Caco-2 (cell line): ENCODE measurements at regions of chr7 and their contacts with region 1.

Region 1: GRCh38 chr7:86939197-86939814 is 120.1 kb downstream of the ELAPOR2 start:
- DNase-seq: peak; percentile 41 to 74
- H3K4me3 ChIP-seq: no peak overlapping the region
- H3K4me3 Mint-ChIP-seq: no peak overlapping the region
- H3K27ac Mint-ChIP-seq: no peak overlapping the region
- H3K4me1 ChIP-seq: no peaks in the 10 kb centered on the region
- H3K4me1 Mint-ChIP-seq: no peaks in the 10 kb centered on the region
- H3K27me3 ChIP-seq: no peaks in the 10 kb centered on the region
- H3K27me3 Mint-ChIP-seq: peaks cover 8% of the 10 kb centered on the region
- CTCF ChIP-seq: peak; percentile 60 to 68

Region 2: GRCh38 chr7:86991771-86992191 is 52.5 kb after region 1 on chr7:
- CTCF ChIA-PET with region 1: no interaction called
- POLR2A ChIA-PET with region 1: no interaction called
- intact Hi-C with region 1: loop called (anchors 5 kb)
- DNase-seq: no peak
- H3K4me3 ChIP-seq: no peak overlapping the region
- H3K4me3 Mint-ChIP-seq: no peak overlapping the region
- H3K27ac Mint-ChIP-seq: no peak overlapping the region
- H3K4me1 ChIP-seq: no peaks in the 10 kb centered on the region
- H3K4me1 Mint-ChIP-seq: no peaks in the 10 kb centered on the region
- H3K27me3 ChIP-seq: no peaks in the 10 kb centered on the region
- H3K27me3 Mint-ChIP-seq: peaks cover 7% of the 10 kb centered on the region
- CTCF ChIP-seq: no peak

Region 3: DNA sequence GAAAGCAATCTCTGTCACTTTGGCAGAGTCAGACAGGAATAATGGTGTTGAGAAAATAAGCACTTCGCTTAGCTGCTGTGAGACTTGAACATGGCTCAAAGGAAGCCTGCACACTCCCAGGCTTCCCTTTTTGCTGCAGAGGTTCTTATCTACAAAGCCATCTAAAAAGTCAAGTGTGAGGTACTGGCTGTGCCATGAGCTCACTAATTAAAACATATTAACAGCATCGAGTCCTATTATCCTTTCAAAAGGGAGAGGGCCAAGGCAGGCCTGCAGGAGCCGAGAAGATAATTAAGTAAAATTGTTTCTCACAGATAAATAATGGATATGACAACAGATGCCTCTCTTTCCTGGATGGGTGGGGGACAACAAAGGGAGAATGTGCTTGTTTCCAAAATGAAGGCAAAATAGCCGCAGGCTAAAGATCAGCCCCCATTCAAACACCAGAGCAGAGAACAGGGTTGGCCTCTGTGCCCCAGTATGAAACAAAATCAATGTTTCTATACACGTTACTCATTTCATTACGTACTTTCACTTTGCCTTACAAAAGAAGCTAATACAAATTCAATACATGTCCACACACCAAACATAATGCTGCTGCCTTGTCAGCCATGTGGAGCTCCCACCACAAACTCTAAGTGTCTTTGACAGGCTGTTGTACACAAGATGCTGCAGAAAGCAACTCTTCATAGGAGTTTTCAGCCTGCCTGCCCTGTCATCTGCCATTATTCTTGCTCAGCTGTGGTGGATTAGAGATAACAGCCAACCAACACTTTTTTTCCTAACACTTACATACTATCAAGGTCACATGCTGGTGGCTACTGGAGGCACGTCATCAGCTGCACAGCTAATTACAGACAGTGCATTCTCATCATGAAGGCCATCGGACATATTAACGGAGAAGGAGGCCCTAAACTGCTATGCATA is 64.8 kb after region 1 on chr7:
- CTCF ChIA-PET with region 1: no interaction called
- POLR2A ChIA-PET with region 1: no interaction called
- intact Hi-C with region 1: no loop called
- DNase-seq: no peak
- H3K4me3 ChIP-seq: no peak overlapping the region
- H3K4me3 Mint-ChIP-seq: no peak overlapping the region
- H3K27ac Mint-ChIP-seq: no peak overlapping the region
- H3K4me1 ChIP-seq: no peaks in the 10 kb centered on the region
- H3K4me1 Mint-ChIP-seq: no peaks in the 10 kb centered on the region
- H3K27me3 ChIP-seq: no peaks in the 10 kb centered on the region
- H3K27me3 Mint-ChIP-seq: peaks cover 2% of the 10 kb centered on the region
- CTCF ChIP-seq: no peak

Region 4: GRCh38 chr7:87059525-87060287 is 120.4 kb after region 1 on chr7 and contains the start of gene ELAPOR2:
- CTCF ChIA-PET with region 1: no interaction called
- POLR2A ChIA-PET with region 1: no interaction called
- intact Hi-C with region 1: loop called (anchors 1 kb)
- DNase-seq: peak; percentile 68 to 85
- H3K4me3 ChIP-seq: peak within 1 kb of the TSS; percentile 44
- H3K4me3 Mint-ChIP-seq: peak within 1 kb of the TSS; percentile 68
- H3K27ac Mint-ChIP-seq: no peak within 1 kb of the TSS
- H3K4me1 ChIP-seq: peaks cover 4% of the 10 kb centered on the region
- H3K4me1 Mint-ChIP-seq: no peaks in the 10 kb centered on the region
- H3K27me3 ChIP-seq: no peaks in the 10 kb centered on the region; the same call in 1 of the 2 replicates
- H3K27me3 Mint-ChIP-seq: peaks cover 13% of the 10 kb centered on the region
- CTCF ChIP-seq: peak; percentile 46 to 59
- total RNA-seq, gene ELAPOR2: 4.6 and 5.6 TPM in 2 replicates